ENCODE measurements at regions of chr19 and their contacts with region 1.

Region 1: GRCh38 chr19:11380653-11381534 is 3.2 kb downstream of the EPOR start:
- DNase-seq: peak; percentile 96 to 98
- H3K4me3 ChIP-seq: peak overlapping the region; percentile 63 to 78
- H3K27ac ChIP-seq: peak overlapping the region; percentile 85 to 88
- H3K4me1 ChIP-seq: peaks cover 0 to 75% (median 62%) of the 10 kb centered on the region in 4 donors
- H3K27me3 ChIP-seq: peaks cover 0 to 25% of the 10 kb centered on the region in 2 donors
- CTCF ChIP-seq: peak; percentile 68 to 72

Region 2: DNA sequence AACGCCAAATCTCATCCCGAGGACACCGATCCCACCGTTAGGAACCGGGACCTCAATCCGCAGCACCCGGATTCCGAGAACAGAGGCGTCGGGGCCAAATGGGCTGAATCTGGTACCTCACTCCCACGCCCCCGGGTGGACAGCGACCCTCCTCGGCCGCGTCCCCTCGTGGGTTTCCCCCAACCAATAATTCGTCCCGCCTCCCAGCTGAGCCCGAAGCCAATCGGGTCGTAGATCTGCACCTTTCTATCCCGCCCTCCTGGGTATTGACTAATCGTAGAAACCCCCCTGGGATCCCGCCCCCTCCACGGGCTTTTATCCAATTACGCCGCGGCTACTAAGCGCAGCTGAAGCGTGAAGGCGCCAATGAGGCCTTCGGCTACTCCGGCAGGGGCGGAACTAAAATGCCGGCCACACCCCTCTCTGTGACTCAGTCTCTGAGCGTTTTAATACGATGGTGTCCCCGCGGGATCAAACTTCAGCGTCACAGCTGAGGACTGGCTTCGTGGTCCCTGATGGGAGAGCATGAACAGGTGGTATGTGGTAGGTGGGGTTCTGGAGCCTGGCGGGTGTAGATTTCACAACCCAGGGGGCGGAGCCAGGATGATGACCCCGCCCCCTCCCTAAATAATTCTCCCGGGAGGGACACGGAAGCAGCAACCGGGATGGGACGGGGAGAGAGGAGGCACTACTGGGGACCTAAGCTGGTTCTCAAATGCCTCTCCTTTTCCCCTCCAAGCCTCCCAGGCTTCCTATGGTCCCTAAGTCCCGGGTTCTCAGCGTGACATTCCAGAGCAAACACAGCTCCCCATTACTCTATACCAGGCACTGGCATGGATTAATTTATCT is 34.6 kb before region 1 on chr19 and contains the starts of genes CCDC159 and TMEM205:
- intact Hi-C with region 1: loop called (anchors 5 kb)
- DNase-seq: peak; percentile 98 to 100
- H3K4me3 ChIP-seq: peak within 1 kb of the TSS; percentile 83 to 85
- H3K27ac ChIP-seq: peak within 1 kb of the TSS; percentile 88 to 94
- H3K4me1 ChIP-seq: peaks cover 0 to 37% (median 32%) of the 10 kb centered on the region in 4 donors
- H3K27me3 ChIP-seq: no peaks in the 10 kb centered on the region
- CTCF ChIP-seq: peak in 1 of 2 experiments; percentile 21

Region 3: DNA sequence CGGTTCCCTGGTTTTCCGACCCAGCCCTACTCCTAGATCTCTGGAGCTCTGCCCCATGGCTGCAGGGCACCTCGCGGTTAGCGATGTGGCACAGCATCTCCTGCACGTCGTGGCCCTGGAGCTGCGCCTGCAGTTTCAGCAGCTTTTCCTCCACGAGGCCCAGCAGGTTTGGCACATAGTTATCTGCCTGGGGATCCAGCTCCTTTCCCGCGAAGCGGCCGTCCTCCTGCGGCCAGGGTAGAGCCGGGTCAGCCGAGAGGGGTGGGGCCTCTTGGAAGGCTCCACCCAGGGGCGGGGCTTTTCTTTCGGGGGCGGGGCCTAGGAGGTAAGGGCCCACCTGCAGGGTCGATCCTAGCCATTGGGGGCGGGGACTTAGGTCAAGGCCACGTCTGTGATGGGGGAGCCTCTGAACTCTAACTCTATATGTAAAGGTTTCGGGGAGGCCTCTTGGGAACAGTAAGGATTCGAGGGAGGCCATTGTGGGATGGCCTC is 40.8 kb after region 1 on chr19:
- intact Hi-C with region 1: loop called (anchors 2 kb)
- DNase-seq: peak; percentile 35 to 74
- H3K4me3 ChIP-seq: peak overlapping the region; percentile 47
- H3K27ac ChIP-seq: peak overlapping the region; percentile 67 to 79
- H3K4me1 ChIP-seq: peaks cover 0 to 51% (median 37%) of the 10 kb centered on the region in 4 donors
- H3K27me3 ChIP-seq: peaks cover 0 to 5% of the 10 kb centered on the region in 2 donors
- CTCF ChIP-seq: no peak